Endothelial cell of umbilical vein (primary cell): ENCODE measurements at regions of chr4 and their contacts with region 1.

Region 1: DNA sequence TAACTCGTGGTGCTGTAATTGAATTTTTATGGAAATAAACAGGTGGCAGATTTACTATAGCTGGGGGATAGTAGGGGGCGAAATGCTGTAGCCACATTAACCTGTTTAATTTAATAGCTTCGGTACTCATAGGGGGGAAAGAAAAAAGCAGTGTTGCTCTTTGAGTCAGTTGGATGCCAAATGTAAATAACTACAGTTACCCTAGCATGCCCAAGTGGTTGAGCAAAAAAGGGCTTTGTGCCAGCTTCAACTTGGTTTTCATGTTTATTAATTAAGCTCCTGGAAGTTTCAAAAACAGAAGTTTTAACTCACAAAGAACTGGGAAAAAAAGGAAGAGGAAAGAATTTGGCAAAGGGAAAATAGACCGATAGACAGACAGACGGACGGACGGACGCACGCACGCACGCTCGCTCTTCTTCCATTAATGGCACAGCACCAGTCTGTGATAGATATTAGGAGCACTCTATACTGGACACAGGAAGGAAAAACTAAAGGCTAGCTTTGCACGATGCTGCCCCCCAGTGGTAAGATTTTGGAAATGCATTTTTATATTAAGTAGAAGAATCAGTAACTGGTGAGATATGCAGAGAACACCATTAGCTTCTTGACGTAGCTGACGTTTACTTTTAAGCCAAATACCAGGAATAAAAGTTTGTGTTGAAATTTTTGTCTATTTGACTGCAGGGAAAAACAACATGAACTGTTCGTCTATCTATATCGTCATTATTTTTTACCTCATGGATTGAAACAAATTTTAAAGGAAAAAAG is 151.8 kb downstream of the SLC7A11 start:
- DNase-seq: peak; percentile 90
- H3K4me3 ChIP-seq: peak overlapping the region in 2 of 3 experiments; percentile 11 to 53
- H3K27ac ChIP-seq: no peak overlapping the region
- H3K4me1 ChIP-seq: peaks cover 6% of the 10 kb centered on the region
- H3K27me3 ChIP-seq: no peaks in the 10 kb centered on the region
- CTCF ChIP-seq: peak; percentile 60 to 62
- POLR2A ChIP-seq: no peak

Region 2: DNA sequence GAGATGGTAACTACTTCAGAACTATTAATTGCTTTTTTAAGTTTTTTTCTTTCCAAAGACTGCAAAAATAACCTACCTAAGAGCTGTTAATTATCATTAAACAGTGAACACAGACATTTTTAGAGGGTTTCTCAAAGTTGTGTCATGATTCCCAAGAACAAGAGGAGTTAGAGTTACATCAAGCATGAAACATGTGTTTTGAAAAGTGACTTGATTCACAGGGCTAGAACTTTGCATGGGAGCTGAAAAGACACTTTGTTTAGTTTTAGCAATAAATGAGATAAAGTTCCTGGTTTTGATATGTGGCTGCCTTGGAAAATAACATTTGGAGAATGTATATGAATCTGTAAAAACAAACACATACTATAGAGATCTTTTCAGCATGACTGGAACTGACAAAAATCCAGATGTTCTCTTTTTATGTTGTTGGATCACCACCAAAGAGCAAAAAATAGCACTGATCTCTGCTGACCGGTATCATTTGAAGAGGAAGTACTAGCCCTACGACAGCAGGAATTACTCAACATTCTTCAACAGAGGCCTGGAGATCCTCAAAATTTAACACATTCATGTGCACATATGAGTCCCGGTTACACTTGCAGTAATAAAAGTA is 385.1 kb before region 1 on chr4:
- CTCF ChIA-PET with region 1: no interaction called
- POLR2A ChIA-PET with region 1: no interaction called
- dilution Hi-C with region 1: no loop called
- intact Hi-C with region 1: no loop called
- DNase-seq: no peak
- H3K4me3 ChIP-seq: no peak overlapping the region
- H3K27ac ChIP-seq: no peak overlapping the region
- H3K4me1 ChIP-seq: no peaks in the 10 kb centered on the region
- H3K27me3 ChIP-seq: no peaks in the 10 kb centered on the region
- CTCF ChIP-seq: no peak
- POLR2A ChIP-seq: no peak

Region 3: DNA sequence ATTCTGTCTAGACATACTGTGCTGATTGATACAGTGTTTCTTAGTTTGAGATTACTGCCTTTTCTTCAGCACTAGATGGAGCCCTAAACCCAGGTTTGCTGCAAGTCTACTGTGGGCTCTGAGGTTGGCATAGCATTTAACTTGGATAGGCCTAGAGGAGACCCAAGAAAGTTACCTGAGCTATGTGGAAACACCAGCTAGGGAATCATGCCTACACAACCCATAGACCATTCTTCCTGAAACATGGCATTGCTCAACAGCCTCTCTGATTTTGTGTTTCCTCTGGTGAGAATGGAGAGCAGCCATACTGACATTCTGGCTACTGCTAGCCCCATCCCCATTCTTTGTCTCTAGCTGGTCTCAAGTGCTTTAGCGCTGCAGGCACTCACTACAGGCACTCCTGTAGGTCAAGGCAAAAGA is 270.4 kb before region 1 on chr4:
- CTCF ChIA-PET with region 1: interaction called, 56 read pairs
- POLR2A ChIA-PET with region 1: no interaction called
- dilution Hi-C with region 1: no loop called
- intact Hi-C with region 1: loop called (anchors 1 kb)
- DNase-seq: peak; percentile 61
- H3K4me3 ChIP-seq: no peak overlapping the region
- H3K27ac ChIP-seq: no peak overlapping the region
- H3K4me1 ChIP-seq: peaks cover 3% of the 10 kb centered on the region
- H3K27me3 ChIP-seq: no peaks in the 10 kb centered on the region
- CTCF ChIP-seq: peak; percentile 46 to 57
- POLR2A ChIP-seq: no peak

Region 4: DNA sequence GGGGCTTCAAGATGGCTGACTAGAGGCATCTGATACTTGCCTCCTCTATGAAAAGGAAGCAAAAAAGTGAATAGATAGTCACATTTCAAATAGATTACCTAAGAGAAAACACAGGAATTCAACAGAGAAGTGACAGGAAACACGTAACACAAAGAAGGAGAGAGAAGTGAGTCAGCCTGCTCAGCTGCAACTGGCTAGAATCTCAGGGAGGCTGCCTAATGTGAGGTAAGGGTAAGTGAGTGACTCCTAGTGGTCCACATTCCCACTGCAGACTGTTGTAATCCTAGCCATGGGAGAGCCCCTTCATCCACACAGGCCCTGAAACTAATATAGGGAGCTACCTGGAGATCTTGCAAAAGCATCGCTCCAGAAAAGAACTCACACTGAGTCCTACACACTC is 27.4 kb before region 1 on chr4:
- CTCF ChIA-PET with region 1: interaction called, 19 read pairs
- POLR2A ChIA-PET with region 1: no interaction called
- dilution Hi-C with region 1: no loop called
- intact Hi-C with region 1: no loop called
- DNase-seq: peak; percentile 65
- H3K4me3 ChIP-seq: no peak overlapping the region
- H3K27ac ChIP-seq: peak overlapping the region; percentile 55
- H3K4me1 ChIP-seq: peaks cover 8% of the 10 kb centered on the region
- H3K27me3 ChIP-seq: no peaks in the 10 kb centered on the region
- CTCF ChIP-seq: peak; percentile 28 to 32
- POLR2A ChIP-seq: no peak

Region 5: GRCh38 chr4:138114434-138114833 is 24.1 kb after region 1 on chr4:
- CTCF ChIA-PET with region 1: interaction called, 17 read pairs
- POLR2A ChIA-PET with region 1: no interaction called
- dilution Hi-C with region 1: no loop called
- intact Hi-C with region 1: no loop called
- DNase-seq: peak; percentile 36
- H3K4me3 ChIP-seq: no peak overlapping the region
- H3K27ac ChIP-seq: peak overlapping the region; percentile 43
- H3K4me1 ChIP-seq: peaks cover 53% of the 10 kb centered on the region
- H3K27me3 ChIP-seq: no peaks in the 10 kb centered on the region
- CTCF ChIP-seq: no peak
- POLR2A ChIP-seq: no peak

Region 6: DNA sequence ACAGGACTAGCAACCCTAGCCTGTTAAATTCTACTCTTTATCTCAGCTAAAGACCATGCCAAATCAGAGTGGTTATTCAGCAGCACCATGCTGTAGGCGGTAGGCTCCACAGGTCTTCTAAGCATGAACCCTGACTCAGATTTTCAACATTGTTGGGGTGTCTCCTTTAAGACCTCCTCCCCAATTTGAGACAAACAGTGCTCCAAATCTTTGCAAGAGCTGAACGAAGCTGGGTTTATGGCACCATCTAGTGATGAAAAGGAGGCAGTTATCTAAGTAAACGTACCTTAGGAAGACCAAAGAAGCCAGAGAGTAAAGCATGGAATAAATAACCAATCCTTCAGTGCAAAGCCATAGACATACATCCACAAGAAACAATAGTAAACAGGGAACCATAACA is 486.4 kb after region 1 on chr4:
- CTCF ChIA-PET with region 1: interaction called, 6 read pairs
- POLR2A ChIA-PET with region 1: no interaction called
- dilution Hi-C with region 1: no loop called
- intact Hi-C with region 1: loop called (anchors 1 kb)
- DNase-seq: peak; percentile 57
- H3K4me3 ChIP-seq: no peak overlapping the region
- H3K27ac ChIP-seq: no peak overlapping the region
- H3K4me1 ChIP-seq: no peaks in the 10 kb centered on the region
- H3K27me3 ChIP-seq: peaks cover under 1 to 3% of the 10 kb centered on the region in 2 experiments
- CTCF ChIP-seq: peak; percentile 31 to 53
- POLR2A ChIP-seq: no peak